ENCODE measurements at regions of chr6 and their contacts with region 1.

Region 1: DNA sequence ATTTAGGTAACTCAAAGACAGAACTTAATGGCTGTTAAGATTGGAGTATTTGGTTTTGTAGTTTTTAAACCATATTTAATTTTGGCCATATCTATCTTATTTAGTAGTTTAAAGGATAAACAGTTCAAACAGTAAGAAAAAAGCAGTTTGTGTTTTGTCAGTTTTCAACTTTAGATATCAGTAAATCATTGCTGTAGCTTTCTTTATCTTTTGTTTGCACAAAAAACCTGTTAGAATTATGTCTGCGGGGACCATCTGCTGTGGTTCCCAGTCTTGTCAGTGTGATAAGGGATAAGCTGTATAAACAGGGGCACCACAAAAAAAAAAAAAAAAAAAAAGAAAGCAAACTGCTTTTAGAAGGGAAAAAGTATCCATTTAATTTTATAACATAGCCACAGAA is 40.9 kb downstream of the CDKAL1 start:
- DNase-seq: no peak
- H3K4me3 ChIP-seq: no peak overlapping the region
- H3K27ac ChIP-seq: no peak overlapping the region
- H3K27me3 ChIP-seq: no peaks in the 10 kb centered on the region
- CTCF ChIP-seq: no peak

Region 2: GRCh38 chr6:20564269-20564668 is 10.9 kb before region 1 on chr6:
- CTCF ChIA-PET with region 1: interaction called, 11 read pairs
- POLR2A ChIA-PET with region 1: no interaction called
- DNase-seq: no peak
- H3K4me3 ChIP-seq: no peak overlapping the region
- H3K27ac ChIP-seq: no peak overlapping the region
- H3K27me3 ChIP-seq: no peaks in the 10 kb centered on the region
- CTCF ChIP-seq: peak; percentile 53